ENCODE measurements at regions of chr16 and their contacts with region 1.

Region 1: GRCh38 chr16:72832621-72833248 is 215.2 kb downstream of the ZFHX3 start:
- DNase-seq: peak; percentile 58 to 97 (median 82)
- ATAC-seq: peak; percentile 86 to 97 (median 92)
- H3K4me3 ChIP-seq: no peak overlapping the region
- H3K27ac ChIP-seq: no peak overlapping the region
- H3K4me1 ChIP-seq: peaks cover 0 to 11% (median 0%) of the 10 kb centered on the region in 3 donors
- H3K27me3 ChIP-seq: no peaks in the 10 kb centered on the region
- CTCF ChIP-seq: peak; percentile 82 to 90 (median 87)

Region 2: DNA sequence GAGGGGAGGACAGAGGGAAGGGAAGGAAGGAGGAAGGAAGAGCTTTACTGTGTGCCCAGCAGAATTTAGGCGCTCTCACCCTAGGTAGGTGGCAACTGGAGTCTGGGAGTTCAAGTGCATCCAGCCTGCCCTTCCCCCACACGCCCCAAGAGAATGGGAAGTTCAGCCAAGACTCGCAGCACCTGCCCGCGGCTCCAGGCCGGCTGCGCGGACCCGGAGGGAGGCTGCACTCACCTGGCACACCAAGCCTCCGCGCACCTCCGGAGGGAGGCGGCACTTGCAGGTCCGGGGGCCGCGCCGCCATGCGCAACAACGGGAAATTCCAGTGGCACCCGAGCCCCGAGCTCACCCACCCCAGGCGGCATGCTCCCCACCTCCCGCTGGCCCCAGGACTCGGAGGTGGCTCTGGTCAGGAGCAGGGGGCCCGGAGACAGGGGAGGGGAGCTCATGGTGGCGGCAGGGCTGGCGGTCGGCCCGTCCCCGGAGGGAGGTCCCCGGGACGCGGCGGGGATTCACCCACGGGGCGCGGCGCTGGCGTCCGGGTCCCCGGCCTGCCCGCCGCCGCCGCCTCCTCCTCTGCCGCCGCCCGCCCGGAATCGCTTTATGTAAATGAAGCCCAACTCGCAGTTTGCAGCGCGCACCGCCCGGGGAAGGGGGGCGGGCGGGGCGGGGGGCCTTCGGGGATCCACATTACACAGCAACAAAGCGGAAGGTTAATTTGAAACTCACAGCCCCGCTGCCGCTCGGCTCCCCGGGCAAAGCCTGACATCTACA is 215.0 kb after region 1 on chr16 and contains the start of gene ZFHX3:
- intact Hi-C with region 1: loop called in 1 of 3 experiments (anchors 10 kb)
- DNase-seq: peak; percentile 80 to 92 (median 84)
- ATAC-seq: peak; percentile 80 to 87 (median 84)
- H3K4me3 ChIP-seq: peak within 1 kb of the TSS; percentile 77 to 89 (median 81)
- H3K27ac ChIP-seq: peak within 1 kb of the TSS; percentile 89 to 92 (median 90)
- H3K4me1 ChIP-seq: peaks cover 19 to 50% (median 44%) of the 10 kb centered on the region in 3 donors
- H3K27me3 ChIP-seq: no peaks in the 10 kb centered on the region
- CTCF ChIP-seq: no peak
- total RNA-seq, gene ZFHX3: 8.7 to 17.6 (median 10.4) TPM

Region 3: DNA sequence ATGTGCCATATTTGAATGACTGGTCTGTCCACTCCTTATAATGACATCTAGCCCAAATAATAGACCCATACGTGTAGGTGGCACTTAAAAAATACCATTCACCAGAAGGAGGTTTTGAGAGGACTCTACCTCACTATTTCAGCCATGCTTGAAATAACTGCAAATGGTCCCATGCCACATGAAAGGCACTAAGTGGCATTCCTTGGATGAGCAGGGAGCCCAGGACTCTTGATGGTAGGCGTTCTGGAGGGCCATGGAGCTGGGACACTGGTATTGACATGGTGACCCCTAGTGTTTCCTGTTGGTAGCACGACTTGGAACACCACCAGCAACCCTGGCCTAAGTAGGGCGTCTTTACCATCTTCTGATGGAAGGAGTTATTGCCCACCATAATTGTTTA is 363.9 kb after region 1 on chr16:
- intact Hi-C with region 1: loop called in 1 of 3 experiments (anchors 10 kb)
- DNase-seq: peak in 4 of 6 donors; percentile 52 to 78 (median 58)
- ATAC-seq: peak; percentile 86 to 100 (median 98)
- H3K4me3 ChIP-seq: no peak overlapping the region
- H3K27ac ChIP-seq: no peak overlapping the region
- H3K4me1 ChIP-seq: no peaks in the 10 kb centered on the region
- H3K27me3 ChIP-seq: no peaks in the 10 kb centered on the region
- CTCF ChIP-seq: peak; percentile 19 to 60 (median 50)

Measured in pancreas (tissue), 10 donors.